Left lung (tissue), 14 donors: ENCODE measurements at regions of chr10 and their contacts with region 1.

Region 1: DNA sequence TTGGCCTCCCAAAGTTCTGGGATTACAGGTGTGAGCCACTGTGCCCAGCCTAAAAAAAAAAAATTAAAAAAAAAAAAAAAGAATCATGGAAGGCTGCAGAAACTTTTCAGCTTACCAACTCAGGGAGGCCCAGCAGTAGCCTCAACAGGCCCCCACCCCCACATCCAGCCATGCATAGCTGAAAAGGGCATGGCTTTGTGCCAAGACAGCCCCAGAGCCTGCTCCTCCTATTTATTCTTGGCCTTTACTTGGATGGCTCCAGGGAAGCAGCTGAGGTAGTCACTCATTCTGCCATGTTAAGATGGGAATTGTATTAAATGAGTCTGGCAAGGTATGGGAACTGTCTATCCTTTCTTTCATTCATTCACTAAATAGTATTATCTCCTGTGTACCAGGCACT is 13.7 kb upstream of the CNNM2 start:
- DNase-seq: no peak
- ATAC-seq: no peak
- H3K4me3 ChIP-seq: no peak overlapping the region
- H3K27ac ChIP-seq: no peak overlapping the region
- H3K4me1 ChIP-seq: no peaks in the 10 kb centered on the region
- H3K27me3 ChIP-seq: no peaks in the 10 kb centered on the region
- CTCF ChIP-seq: no peak

Region 2: GRCh38 chr10:102729029-102730026 is 175.0 kb before region 1 on chr10:
- intact Hi-C with region 1: loop called in 1 of 2 experiments (anchors 5 kb)
- DNase-seq: peak; percentile 67 to 96 (median 86)
- ATAC-seq: peak; percentile 97
- H3K4me3 ChIP-seq: no peak overlapping the region
- H3K27ac ChIP-seq: no peak overlapping the region
- H3K4me1 ChIP-seq: peaks cover 0 to 13% of the 10 kb centered on the region in 2 donors
- H3K27me3 ChIP-seq: no peaks in the 10 kb centered on the region
- CTCF ChIP-seq: peak; percentile 84 to 96

Region 3: GRCh38 chr10:102743588-102744373 is 160.6 kb before region 1 on chr10 and contains the start of gene WBP1L:
- intact Hi-C with region 1: no loop called
- DNase-seq: peak; percentile 95 to 99 (median 97)
- ATAC-seq: peak; percentile 97
- H3K4me3 ChIP-seq: peak within 1 kb of the TSS; percentile 93 to 98
- H3K27ac ChIP-seq: peak within 1 kb of the TSS; percentile 78 to 86
- H3K4me1 ChIP-seq: peaks cover 12 to 30% of the 10 kb centered on the region in 2 donors
- H3K27me3 ChIP-seq: no peaks in the 10 kb centered on the region
- CTCF ChIP-seq: no peak
- polyA plus RNA-seq, gene WBP1L: 42.6 to 46.2 (median 45.5) TPM

Region 4: DNA sequence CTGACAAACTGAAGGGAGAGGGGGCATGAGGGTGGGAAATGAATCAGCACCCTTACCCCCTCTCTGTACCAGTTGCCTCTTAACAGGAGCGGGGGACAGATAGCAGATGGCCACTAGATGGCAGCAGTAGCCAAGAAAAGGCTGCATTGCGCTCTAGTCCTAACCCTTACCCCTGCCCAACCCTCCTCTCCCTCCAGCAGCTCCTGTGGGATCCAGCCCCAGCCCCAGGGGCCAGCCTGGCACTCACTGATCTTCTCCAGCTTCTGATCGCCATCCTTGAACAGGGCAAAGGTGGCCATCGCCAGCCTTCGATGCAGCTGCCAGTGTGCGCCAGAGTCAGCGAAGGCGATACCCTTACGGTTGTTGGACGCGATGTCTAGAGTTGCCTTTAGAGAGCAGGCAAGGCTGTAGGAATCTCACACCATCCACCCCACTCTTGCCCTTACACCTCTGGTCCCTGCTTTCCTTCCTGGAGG is 69.3 kb before region 1 on chr10:
- intact Hi-C with region 1: loop called in 1 of 2 experiments (anchors 5 kb)
- DNase-seq: peak in 3 of 4 donors; percentile 68 to 85 (median 70)
- ATAC-seq: peak; percentile 95
- H3K4me3 ChIP-seq: no peak overlapping the region
- H3K27ac ChIP-seq: no peak overlapping the region
- H3K4me1 ChIP-seq: peaks cover 0 to 8% of the 10 kb centered on the region in 2 donors
- H3K27me3 ChIP-seq: no peaks in the 10 kb centered on the region
- CTCF ChIP-seq: peak; percentile 86 to 93

Region 5: GRCh38 chr10:103181244-103181643 is 276.9 kb after region 1 on chr10:
- intact Hi-C with region 1: no loop called
- DNase-seq: no peak
- ATAC-seq: peak; percentile 51
- H3K4me3 ChIP-seq: no peak overlapping the region
- H3K27ac ChIP-seq: peak overlapping the region; percentile 13 to 66
- H3K4me1 ChIP-seq: peaks cover 30 to 64% of the 10 kb centered on the region in 2 donors
- H3K27me3 ChIP-seq: no peaks in the 10 kb centered on the region
- CTCF ChIP-seq: no peak